GM23248 (cell line): ENCODE measurements at regions of chr18 and their contacts with region 1.

Region 1: GRCh38 chr18:31546476-31546875 is 45.2 kb upstream of the TTR start:
- DNase-seq: no peak
- H3K4me3 ChIP-seq: no peak overlapping the region
- H3K27ac ChIP-seq: no peak overlapping the region
- H3K4me1 ChIP-seq: no peaks in the 10 kb centered on the region
- H3K27me3 ChIP-seq: no peaks in the 10 kb centered on the region

Region 2: GRCh38 chr18:31429621-31430020 is 116.9 kb before region 1 on chr18:
- in situ Hi-C with region 1: loop called (anchors 25 kb)
- DNase-seq: no peak
- H3K4me3 ChIP-seq: no peak overlapping the region
- H3K27ac ChIP-seq: no peak overlapping the region
- H3K4me1 ChIP-seq: no peaks in the 10 kb centered on the region
- H3K27me3 ChIP-seq: no peaks in the 10 kb centered on the region

Region 3: DNA sequence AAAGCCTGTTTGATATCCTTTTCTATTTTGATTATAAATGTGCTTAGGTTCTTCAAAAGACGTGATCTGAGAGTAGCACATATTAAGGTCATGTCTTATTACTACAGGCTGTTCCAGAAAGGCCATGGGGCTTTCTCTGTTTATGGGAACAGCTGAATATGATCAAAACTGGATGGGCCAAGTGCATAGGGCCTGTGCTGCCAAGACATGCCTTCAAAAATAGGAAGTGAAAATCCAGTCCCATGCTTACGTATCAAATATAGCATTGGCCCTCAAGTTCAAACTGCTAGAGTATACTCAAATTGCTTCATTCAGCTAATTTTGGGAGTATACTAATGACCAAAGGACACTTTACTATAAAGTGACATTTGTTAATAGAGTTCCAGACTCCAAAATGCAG is 190.2 kb after region 1 on chr18:
- in situ Hi-C with region 1: no loop called
- DNase-seq: no peak
- H3K4me3 ChIP-seq: no peak overlapping the region
- H3K27ac ChIP-seq: no peak overlapping the region
- H3K4me1 ChIP-seq: no peaks in the 10 kb centered on the region
- H3K27me3 ChIP-seq: no peaks in the 10 kb centered on the region; the same call in 1 of the 2 replicates